Activated CD4-positive, alpha-beta T cell treated with anti-CD3 and anti-CD28 coated beads for 36 hours (primary cell): ENCODE measurements at regions of chr4 and their contacts with region 1.

Region 1: GRCh38 chr4:21366312-21366711 is 582.3 kb downstream of the KCNIP4 start:
- DNase-seq: no peak
- ATAC-seq: no peak
- H3K4me3 Mint-ChIP-seq: no peak overlapping the region
- H3K27ac Mint-ChIP-seq: no peak overlapping the region
- H3K4me1 Mint-ChIP-seq: no peaks in the 10 kb centered on the region
- H3K27me3 Mint-ChIP-seq: peaks cover 1% of the 10 kb centered on the region

Region 2: GRCh38 chr4:19631814-19632213 is 1734.5 kb before region 1 on chr4:
- CTCF ChIA-PET with region 1: no interaction called
- POLR2A ChIA-PET with region 1: no interaction called
- intact Hi-C with region 1: loop called in 1 of 2 experiments (anchors 5 kb)
- DNase-seq: no peak
- ATAC-seq: no peak
- H3K4me3 Mint-ChIP-seq: no peak overlapping the region
- H3K27ac Mint-ChIP-seq: no peak overlapping the region
- H3K4me1 Mint-ChIP-seq: no peaks in the 10 kb centered on the region
- H3K27me3 Mint-ChIP-seq: no peaks in the 10 kb centered on the region

Region 3: DNA sequence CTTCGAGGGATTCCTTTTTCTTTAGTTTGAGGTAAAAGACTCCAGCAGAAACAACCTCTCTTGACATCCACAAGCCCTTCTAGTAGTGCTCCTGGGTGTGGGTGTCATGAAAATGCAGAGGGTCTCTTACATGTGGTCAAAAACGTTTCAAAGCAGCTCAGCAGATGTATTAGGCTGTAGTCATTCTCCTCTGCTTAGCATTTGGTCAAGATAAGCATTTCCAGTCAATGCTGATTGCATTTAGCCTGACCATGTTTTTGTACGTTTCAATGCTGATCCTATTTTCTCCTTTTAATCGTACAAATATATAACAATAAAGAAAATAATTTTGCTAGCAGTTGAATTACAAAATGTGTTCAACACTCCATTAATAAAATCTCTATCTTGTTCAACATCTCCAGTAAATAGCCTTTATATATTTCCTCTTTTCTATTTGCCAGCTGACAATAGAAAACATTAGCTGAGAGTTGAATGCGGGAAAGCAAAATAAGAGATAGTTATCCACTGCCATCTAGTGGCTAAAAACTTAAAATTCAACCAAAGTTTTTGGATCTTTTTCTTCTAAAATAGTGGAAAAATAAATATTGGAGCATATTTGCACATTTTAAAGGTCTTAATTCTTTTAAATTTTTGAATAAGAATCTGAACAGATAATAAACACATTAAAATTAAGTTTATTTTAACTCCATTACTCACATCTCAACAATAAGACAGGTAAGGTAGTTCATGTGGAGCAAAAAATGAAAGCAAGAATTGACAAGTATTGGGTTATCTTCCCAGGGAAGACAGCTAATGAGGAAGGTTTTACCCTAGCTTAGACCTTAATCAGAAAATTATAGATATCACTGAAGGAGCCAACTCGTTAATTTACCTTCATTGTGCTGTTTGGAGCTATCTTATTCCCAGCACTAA is 681.2 kb before region 1 on chr4:
- CTCF ChIA-PET with region 1: no interaction called
- POLR2A ChIA-PET with region 1: no interaction called
- intact Hi-C with region 1: no loop called
- DNase-seq: no peak
- ATAC-seq: no peak
- H3K4me3 Mint-ChIP-seq: no peak overlapping the region
- H3K27ac Mint-ChIP-seq: no peak overlapping the region
- H3K4me1 Mint-ChIP-seq: no peaks in the 10 kb centered on the region
- H3K27me3 Mint-ChIP-seq: peaks cover 10% of the 10 kb centered on the region

Region 4: DNA sequence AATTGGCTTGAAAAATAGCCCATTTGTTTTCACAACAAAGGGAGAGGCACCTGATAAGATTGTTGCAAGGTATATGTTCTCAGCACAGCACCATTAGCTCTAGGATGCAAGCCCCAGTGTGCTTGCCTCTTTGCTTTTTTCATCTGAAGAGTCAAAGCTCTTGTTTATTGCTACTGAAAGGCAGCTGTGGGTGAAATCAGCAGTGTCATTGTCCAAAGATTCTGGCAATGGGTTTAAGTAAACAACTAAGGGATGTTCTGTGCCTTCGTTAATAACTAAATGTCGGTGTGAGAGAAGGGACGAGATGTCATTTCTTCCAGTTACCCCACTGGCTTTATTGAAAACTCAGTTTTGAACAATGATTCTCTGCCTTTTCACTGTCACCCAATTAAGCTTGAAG is 14.5 kb after region 1 on chr4:
- CTCF ChIA-PET with region 1: no interaction called
- POLR2A ChIA-PET with region 1: no interaction called
- intact Hi-C with region 1: no loop called
- DNase-seq: no peak
- ATAC-seq: no peak
- H3K4me3 Mint-ChIP-seq: no peak overlapping the region
- H3K27ac Mint-ChIP-seq: no peak overlapping the region
- H3K4me1 Mint-ChIP-seq: no peaks in the 10 kb centered on the region
- H3K27me3 Mint-ChIP-seq: no peaks in the 10 kb centered on the region